ENCODE measurements at regions of chr6 and their contacts with region 1.

Region 1: DNA sequence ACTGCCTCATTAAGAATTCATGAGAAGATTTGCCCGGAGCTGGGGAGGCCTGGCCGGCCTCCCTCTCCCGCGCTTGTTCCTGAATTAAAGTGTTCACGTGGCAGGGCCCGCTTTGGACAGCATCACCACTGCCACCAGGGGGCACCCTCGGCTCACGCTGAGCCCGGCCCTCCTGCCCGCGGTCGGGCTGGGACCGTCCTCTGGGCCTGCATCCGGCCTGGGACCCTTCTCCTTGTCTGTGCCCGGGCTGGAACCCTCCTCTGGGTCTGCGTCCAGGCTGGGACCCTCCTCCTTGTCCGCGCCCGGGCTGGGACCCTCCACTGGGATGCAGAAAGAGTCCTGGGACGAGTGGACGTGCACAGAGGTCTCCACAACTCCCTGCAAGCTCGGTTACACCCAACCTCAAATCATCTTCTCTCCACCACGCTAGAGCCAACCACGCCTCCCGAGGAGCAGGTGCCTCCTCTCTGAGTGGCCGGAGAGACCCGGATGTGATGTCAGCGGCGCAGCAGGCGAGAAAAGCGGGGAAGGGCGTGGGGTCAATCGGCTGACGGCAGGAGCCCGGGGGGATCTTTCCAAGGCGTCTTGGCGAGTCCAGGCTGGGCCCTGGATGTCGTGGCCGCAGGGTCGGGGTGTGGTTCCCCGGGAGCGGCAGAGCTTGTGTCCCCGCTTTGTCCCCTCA is 50.9 kb upstream of the DACT2 start:
- DNase-seq: peak; percentile 79 to 92 (median 90)
- ATAC-seq: peak; percentile 99
- H3K4me3 ChIP-seq: no peak overlapping the region
- H3K27ac ChIP-seq: no peak overlapping the region
- H3K4me1 ChIP-seq: peaks cover 0 to 8% of the 10 kb centered on the region in 2 experiments; a peak in 2 of 5 replicates
- H3K27me3 ChIP-seq: peaks cover 25 to 80% of the 10 kb centered on the region in 2 experiments
- CTCF ChIP-seq: peak; percentile 90 to 93 (median 92)
- EP300 ChIP-seq: no peak
- POLR2A ChIP-seq: no peak
- RAD21 ChIP-seq: peak; percentile 87 to 92

Region 2: DNA sequence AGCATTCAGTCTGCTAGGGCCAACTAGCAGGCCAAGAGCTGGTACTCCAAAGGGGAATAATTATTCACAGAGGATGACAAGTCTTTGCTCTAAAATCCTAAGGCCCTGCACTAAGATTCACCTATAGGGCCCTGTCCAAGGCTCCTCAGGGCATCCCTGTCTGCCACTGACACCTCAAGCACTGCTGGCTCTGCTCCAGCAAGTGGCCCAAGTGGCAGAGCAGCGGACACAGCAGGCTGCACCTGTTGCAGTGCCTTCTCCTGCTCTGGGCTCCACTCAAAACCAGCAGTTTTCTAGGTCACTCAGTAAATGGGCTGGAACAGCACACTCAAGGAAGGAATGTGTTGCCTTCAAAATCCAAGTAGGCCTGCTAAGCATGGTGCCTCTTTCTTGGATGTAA is 34.1 kb after region 1 on chr6:
- CTCF ChIA-PET with region 1: no interaction called
- POLR2A ChIA-PET with region 1: no interaction called
- in situ Hi-C with region 1: no loop called
- intact Hi-C with region 1: no loop called
- DNase-seq: no peak
- ATAC-seq: no peak
- H3K4me3 ChIP-seq: no peak overlapping the region
- H3K27ac ChIP-seq: no peak overlapping the region
- H3K4me1 ChIP-seq: no peaks in the 10 kb centered on the region
- H3K27me3 ChIP-seq: peaks cover 12 to 13% of the 10 kb centered on the region in 2 experiments; a peak in 4 of 5 replicates
- CTCF ChIP-seq: no peak
- EP300 ChIP-seq: no peak
- POLR2A ChIP-seq: no peak
- RAD21 ChIP-seq: no peak

Region 3: DNA sequence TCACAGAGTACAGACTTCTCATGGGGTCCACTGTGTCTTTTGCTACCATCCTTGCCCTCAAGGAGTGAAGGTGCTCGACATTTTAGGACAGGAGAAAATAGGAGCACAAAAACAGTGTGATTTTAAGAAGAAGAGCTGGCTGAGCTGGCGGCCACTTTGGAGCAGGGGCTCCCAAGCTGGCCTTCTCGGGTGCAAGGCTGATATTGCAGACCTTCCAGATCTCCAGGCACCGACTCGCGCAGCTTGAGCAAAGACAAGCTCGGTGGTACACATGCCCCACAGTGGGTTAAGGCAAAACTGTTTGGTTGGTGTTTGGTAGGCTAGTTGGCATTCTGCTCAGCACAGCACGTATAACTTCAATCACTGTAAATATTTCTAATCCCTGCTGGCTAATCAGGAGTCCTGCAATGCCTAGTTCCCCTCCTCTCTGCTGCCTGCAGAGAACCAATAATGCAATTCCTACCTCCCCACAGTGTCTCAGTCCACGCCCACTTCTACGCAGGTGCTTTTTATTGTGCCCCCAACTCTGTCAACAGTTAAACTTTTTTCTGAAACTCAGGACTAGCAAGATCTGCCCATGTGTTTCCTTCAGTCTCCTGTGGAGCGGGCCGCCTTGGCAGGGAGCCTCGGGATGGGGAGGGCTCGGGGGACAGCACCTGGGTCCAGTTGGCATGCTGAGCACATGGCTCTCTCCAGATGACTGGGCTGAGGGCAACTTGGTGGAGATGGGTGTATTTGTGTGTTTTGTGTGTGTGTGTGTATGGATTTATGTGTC is 57.8 kb after region 1 on chr6:
- CTCF ChIA-PET with region 1: no interaction called
- POLR2A ChIA-PET with region 1: no interaction called
- in situ Hi-C with region 1: no loop called
- intact Hi-C with region 1: no loop called
- DNase-seq: no peak
- ATAC-seq: no peak
- H3K4me3 ChIP-seq: no peak overlapping the region
- H3K27ac ChIP-seq: no peak overlapping the region
- H3K4me1 ChIP-seq: no peaks in the 10 kb centered on the region
- H3K27me3 ChIP-seq: peaks cover 0 to 15% of the 10 kb centered on the region in 2 experiments; a peak in 2 of 5 replicates
- CTCF ChIP-seq: no peak
- EP300 ChIP-seq: no peak
- POLR2A ChIP-seq: no peak
- RAD21 ChIP-seq: no peak

Region 4: DNA sequence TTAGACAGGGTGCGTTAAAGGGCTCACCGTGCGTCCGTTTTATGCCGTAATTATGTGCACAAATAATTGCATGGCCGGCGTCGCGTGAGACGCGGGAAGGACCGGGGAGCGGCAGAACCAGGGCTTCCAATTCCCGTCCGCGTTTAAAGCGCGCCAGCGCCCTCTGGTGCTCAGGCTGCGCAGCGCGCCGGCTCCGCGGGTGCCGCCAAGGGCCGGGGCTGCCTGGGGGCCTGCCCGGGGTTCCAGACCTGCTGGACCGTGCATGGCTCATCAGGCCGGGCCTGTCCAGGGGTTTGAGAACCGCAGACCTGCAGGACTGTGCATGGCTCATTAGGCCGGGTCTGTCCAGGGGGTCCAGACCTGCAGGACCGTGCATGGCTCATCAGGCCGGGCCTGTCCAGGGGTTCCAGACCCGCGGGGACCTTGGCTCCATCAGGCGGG is 514.2 kb after region 1 on chr6:
- CTCF ChIA-PET with region 1: interaction called, 5 read pairs
- POLR2A ChIA-PET with region 1: interaction called, 4 read pairs
- in situ Hi-C with region 1: no loop called
- intact Hi-C with region 1: loop called (anchors 1 kb)
- DNase-seq: peak; percentile 70 to 89 (median 88)
- ATAC-seq: peak; percentile 99
- H3K4me3 ChIP-seq: no peak overlapping the region
- H3K27ac ChIP-seq: no peak overlapping the region
- H3K4me1 ChIP-seq: peaks cover 0 to 4% of the 10 kb centered on the region in 2 experiments; a peak in 1 of 5 replicates
- H3K27me3 ChIP-seq: peaks cover 40 to 78% of the 10 kb centered on the region in 2 experiments
- CTCF ChIP-seq: peak; percentile 88 to 94 (median 89)
- EP300 ChIP-seq: no peak
- POLR2A ChIP-seq: no peak
- RAD21 ChIP-seq: peak; percentile 75 to 92

Region 5: DNA sequence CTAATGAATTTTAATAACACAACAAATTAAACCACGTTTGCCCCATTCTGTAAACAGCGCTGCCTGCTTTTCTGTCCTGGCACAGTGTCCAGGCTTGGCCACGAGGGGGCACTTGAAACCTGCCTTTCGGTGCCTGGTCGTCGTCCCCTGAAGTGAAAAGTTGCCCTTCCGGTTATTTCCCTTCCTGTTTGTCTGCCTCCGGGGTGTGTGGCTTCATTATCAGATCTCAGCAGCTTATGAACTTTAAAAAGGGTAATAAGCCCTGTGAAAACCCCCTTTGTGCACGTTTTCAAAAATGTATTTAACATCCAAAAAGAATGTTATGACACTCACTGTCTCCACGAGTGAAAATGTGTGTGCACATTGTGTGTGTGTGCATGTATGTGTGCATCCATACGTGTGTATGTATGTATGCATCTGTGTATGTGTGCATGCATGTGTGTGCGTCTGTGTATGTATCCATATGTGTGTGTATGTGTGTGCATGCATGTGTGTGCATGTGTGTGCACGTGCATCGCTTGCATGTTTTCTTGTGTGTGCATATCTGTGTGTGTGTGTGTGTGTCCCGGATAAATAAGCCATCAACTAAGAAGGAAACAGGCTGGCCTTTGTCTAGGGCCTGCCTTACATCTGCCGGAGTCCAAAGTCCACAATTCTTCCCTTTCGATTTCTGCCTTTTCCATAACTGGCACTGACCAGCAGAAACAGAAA is 524.8 kb after region 1 on chr6:
- CTCF ChIA-PET with region 1: no interaction called
- POLR2A ChIA-PET with region 1: no interaction called
- in situ Hi-C with region 1: loop called (anchors 5 kb)
- intact Hi-C with region 1: no loop called
- DNase-seq: peak; percentile 81 to 88 (median 86)
- ATAC-seq: peak; percentile 99
- H3K4me3 ChIP-seq: no peak overlapping the region
- H3K27ac ChIP-seq: no peak overlapping the region
- H3K4me1 ChIP-seq: no peaks in the 10 kb centered on the region
- H3K27me3 ChIP-seq: peaks cover 13 to 47% of the 10 kb centered on the region in 2 experiments; a peak in 4 of 5 replicates
- CTCF ChIP-seq: peak; percentile 92 to 96 (median 95)
- EP300 ChIP-seq: 0 out of 2 replicates have a peak, but pooled peaks have one; percentile 24
- POLR2A ChIP-seq: no peak
- RAD21 ChIP-seq: peak; percentile 91 to 92

Measured in K562 (cell line).